ENCODE measurements at regions of chr1 and their contacts with region 1.

Region 1: GRCh38 chr1:167442124-167442848 is 76.0 kb downstream of the CD247 start:
- DNase-seq: no peak
- H3K4me3 ChIP-seq: no peak overlapping the region
- CTCF ChIP-seq: peak; percentile 95

Region 2: GRCh38 chr1:167066333-167067122 is 375.8 kb before region 1 on chr1:
- CTCF ChIA-PET with region 1: interaction called, 66 read pairs
- POLR2A ChIA-PET with region 1: no interaction called
- DNase-seq: no peak
- H3K4me3 ChIP-seq: peak overlapping the region; percentile 45
- CTCF ChIP-seq: peak; percentile 97

Region 3: DNA sequence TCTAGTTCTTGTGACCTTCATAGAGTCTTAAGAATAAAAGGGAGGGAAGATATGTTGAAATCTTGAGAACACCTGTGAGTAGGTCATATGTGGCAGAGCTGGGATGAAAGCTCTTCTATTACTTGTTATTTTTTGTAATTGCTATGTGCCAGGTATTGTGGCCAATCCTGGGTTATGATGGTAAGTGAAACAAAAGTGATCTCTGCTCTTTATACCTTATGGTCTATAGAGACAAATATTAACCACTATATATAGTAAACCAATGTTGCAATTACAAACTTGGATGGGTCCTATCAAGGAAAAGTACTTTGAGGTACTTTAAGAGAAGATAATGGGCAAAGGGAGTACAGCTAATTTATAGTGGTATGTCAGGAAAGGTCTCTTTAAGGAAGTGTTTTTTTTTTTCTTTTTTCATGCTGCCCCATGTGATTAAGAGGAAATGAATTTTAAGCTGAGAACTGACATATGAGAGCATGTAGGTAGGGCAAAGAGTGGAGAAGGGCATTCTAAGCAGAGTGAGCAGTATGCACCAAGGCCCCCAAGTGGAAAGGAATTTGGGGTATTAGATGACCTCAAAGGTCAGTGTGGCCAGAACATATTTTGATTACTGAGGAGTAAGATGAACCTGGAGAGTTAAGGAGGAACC is 178.3 kb before region 1 on chr1:
- CTCF ChIA-PET with region 1: interaction called, 132 read pairs
- POLR2A ChIA-PET with region 1: no interaction called
- DNase-seq: no peak
- H3K4me3 ChIP-seq: no peak overlapping the region
- CTCF ChIP-seq: no peak

Region 4: GRCh38 chr1:167423684-167424619 is 18.3 kb before region 1 on chr1:
- CTCF ChIA-PET with region 1: interaction called, 11 read pairs
- POLR2A ChIA-PET with region 1: no interaction called
- DNase-seq: no peak
- H3K4me3 ChIP-seq: no peak overlapping the region
- CTCF ChIP-seq: no peak

Region 5: GRCh38 chr1:167454894-167455785 is 12.9 kb after region 1 on chr1:
- CTCF ChIA-PET with region 1: interaction called, 14 read pairs
- POLR2A ChIA-PET with region 1: no interaction called
- DNase-seq: no peak
- H3K4me3 ChIP-seq: peak overlapping the region; percentile 66
- CTCF ChIP-seq: no peak

Region 6: GRCh38 chr1:167499664-167500101 is 57.4 kb after region 1 on chr1:
- CTCF ChIA-PET with region 1: no interaction called
- POLR2A ChIA-PET with region 1: no interaction called
- DNase-seq: no peak
- H3K4me3 ChIP-seq: no peak overlapping the region
- CTCF ChIP-seq: no peak

Region 7: DNA sequence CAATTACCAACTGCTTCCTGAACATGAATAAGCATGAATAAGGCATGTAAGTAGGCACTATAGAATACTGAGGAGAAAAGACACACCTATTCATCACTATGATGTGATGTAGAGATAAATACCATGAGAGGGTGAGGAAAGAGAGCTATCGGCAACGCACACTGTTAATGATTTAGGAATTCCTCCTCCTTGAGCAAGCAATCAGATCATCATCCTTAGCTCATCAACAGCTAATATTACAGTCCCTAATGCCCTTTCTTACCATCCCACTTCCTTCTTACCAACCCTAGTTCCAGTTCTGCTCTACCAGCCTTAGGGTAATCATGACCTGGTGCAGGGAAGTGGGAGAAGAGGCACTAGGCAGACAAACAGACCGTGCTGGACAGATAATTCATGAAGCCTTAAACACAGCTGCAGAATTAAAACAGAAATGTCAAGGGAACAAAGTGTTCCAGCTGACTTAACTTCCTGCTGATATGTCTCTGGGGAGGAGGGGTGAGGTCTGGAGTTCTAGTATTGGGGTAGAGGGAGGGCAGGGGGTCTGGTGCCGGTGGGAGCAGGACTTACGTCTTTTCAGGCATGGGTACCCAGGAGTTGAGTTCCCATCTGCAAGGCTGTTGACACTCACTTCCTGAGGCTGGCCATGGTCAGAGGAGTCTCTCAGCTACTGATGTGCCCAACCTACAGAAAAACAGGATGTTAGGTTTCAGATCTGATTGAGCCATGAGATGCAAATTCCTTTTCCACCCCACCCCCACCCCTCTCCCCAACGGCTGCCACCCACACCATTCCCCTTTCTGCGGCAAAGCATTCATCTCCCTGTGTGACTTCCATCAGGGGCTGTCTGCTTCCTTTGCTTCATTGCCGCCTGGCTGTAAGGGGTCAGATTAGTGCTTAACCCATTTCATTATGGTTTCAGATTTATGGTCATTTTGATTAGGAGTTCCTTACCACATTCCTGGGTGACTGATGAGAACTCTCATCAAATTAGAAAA is 175.2 kb after region 1 on chr1:
- CTCF ChIA-PET with region 1: no interaction called
- POLR2A ChIA-PET with region 1: no interaction called
- DNase-seq: no peak
- H3K4me3 ChIP-seq: no peak overlapping the region
- CTCF ChIP-seq: no peak

Measured in AG04449 (cell line).